ENCODE measurements at regions of chr3 and their contacts with region 1.

Region 1: DNA sequence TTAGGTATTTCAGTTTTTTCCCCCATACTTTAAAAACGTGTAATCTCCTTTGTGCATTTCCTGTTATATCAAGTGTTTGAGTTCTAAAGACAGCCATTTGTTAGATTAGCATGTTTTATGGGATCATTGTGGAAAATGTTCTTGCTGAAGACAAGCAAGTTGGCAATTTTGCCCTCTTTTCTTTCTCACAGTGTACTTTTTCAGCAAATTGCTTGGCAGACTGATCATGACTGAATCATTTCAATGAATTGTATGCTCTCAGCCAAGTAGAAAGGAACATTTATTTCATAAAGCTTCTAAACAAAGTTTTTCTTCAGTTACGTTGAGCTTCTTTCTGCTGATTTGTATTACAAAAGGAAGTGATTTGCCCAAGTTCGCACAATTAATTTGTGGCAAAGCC is 51.6 kb downstream of the ATG7 start:
- DNase-seq: no peak

Region 2: GRCh38 chr3:11155341-11156025 is 168.3 kb before region 1 on chr3:
- intact Hi-C with region 1: loop called (anchors 10 kb)
- DNase-seq: peak; percentile 91

Region 3: DNA sequence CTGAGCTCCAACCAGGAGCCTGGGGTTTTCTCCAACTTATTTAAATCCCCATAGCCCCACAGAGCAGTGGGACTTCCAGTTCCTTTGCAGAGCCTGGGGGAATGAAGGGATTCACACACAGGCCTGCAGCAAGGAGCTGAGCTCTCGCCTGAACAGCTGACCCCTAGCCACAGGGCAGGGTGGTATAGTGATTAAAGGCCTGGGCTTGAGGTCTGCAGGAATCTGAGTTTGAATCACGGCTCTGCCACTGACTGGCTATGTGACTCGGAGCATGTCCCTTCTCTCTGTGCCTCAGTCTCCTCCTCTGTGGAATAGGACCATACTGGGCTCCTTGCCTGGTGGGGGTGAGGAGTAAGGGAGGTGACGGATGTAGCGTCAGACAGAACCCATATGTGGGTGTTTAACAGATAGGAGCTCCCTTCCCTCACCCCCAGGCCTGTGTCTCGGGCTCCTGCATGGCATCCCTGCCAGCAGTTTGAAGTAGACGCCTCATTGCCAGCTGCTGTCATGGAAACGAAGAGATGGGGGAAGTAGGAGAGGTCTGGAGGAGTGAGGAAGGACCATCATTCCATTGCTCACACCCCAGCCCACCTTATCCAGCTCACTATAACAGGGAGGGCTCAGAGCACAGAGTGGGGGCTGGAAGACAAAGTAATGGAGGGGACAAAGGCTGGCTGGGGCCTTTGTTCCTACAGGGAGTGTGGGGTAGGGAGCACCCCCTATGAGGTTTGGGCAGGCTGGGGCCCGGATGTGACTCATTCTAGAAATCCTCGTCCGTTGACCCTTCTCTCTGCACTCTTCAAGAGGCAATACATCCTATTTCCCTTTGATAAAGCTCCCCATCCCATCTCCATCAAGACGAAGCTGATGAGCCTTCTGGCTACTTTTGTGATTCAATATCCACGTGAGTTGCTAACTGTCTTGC is 154.7 kb before region 1 on chr3:
- intact Hi-C with region 1: loop called in 1 of 2 experiments (anchors 10 kb)
- DNase-seq: no peak

Region 4: DNA sequence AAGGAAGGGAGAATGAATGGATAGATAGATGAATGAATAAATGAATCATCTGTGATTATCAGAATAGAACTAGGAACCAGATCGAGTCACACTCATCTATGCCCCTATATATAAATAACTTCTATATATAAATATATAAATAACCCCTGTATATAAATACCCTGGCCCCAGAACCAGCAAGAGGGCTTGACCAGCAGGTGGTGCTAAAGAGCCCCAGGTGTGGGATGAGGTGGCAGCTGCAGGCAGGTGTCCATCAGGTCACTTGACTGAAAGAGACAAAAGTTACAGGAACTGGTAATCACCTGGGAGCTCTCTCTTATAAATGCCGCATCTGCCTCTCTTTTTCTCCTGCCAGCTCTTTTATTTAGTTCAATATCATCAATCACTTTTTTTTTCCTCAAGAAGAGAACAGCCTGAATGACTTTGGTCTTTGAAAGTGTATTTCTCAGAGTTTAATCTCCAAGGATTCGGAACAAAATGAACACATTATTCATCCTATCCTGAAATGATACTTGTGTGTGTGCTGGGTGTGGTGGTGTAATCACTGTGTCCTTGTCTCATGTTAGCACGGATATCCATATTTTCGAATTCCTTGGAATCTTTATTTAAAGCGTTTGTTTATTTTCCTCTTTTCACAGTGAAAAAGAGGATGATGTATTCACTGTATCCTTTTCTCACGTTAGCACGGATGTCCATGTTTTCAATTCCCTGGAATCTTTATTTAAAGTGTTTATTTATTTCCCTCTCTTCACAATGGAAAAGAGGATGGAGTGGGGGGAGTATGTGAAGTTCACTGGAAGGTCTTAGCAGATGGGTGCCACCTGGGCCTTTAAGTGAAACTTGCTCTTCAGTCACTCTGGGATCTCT is 87.0 kb before region 1 on chr3:
- intact Hi-C with region 1: no loop called
- DNase-seq: no peak

Region 5: GRCh38 chr3:11271986-11272904 is 51.6 kb before region 1 on chr3 and contains the start of gene ATG7:
- intact Hi-C with region 1: no loop called
- DNase-seq: peak; percentile 99
- total RNA-seq, gene ATG7: 30.5 to 40.4 TPM